ENCODE measurements at regions of chr2 and their contacts with region 1.

Region 1: DNA sequence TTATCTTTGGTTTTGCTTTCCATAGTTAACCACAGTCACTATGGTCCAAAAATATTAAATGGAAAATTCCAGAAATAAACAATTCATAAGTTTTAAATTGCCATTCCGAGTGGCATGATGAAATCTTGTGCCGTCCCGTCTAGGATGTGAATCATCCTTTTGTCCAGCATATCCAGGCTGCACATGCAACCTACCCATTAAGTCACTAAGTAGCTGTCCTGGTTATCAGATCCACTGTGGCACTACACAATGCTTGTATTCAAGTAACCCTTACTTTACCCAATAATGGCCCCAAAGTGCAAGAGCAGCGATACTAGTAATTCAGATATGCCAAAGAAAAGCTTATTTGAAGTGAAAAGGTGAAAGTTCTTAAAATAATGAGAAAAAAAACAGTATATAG is 10.7 kb downstream of the USP34 start:
- DNase-seq: no peak

Region 2: GRCh38 chr2:61247204-61247812 is 212.9 kb before region 1 on chr2:
- intact Hi-C with region 1: no loop called
- DNase-seq: no peak

Region 3: GRCh38 chr2:61405813-61406212 is 54.4 kb before region 1 on chr2:
- intact Hi-C with region 1: loop called in 1 of 2 experiments (anchors 10 kb)
- DNase-seq: no peak

Region 4: GRCh38 chr2:61443342-61444041 is 16.7 kb before region 1 on chr2:
- intact Hi-C with region 1: no loop called
- DNase-seq: no peak

Measured in posterior vena cava (tissue), 2 donors.